ENCODE measurements at regions of chr11 and their contacts with region 1.

Region 1: GRCh38 chr11:15819679-15820286 is 536.6 kb downstream of the SOX6 start:
- DNase-seq: peak; percentile 73
- H3K4me3 ChIP-seq: no peak overlapping the region
- H3K27ac ChIP-seq: no peak overlapping the region
- H3K4me1 ChIP-seq: peaks cover 52% of the 10 kb centered on the region
- H3K27me3 ChIP-seq: no peaks in the 10 kb centered on the region
- CTCF ChIP-seq: peak; percentile 94

Region 2: GRCh38 chr11:15663777-15664218 is 156.0 kb before region 1 on chr11:
- intact Hi-C with region 1: loop called (anchors 10 kb)
- DNase-seq: no peak
- H3K4me3 ChIP-seq: no peak overlapping the region
- H3K27ac ChIP-seq: no peak overlapping the region
- H3K4me1 ChIP-seq: no peaks in the 10 kb centered on the region
- H3K27me3 ChIP-seq: no peaks in the 10 kb centered on the region
- CTCF ChIP-seq: no peak

Region 3: GRCh38 chr11:16160146-16160545 is 340.4 kb after region 1 on chr11:
- intact Hi-C with region 1: no loop called
- DNase-seq: no peak
- H3K4me3 ChIP-seq: no peak overlapping the region
- H3K27ac ChIP-seq: no peak overlapping the region
- H3K4me1 ChIP-seq: no peaks in the 10 kb centered on the region
- H3K27me3 ChIP-seq: no peaks in the 10 kb centered on the region
- CTCF ChIP-seq: no peak